ENCODE measurements at regions of chr1 and their contacts with region 1.

Region 1: GRCh38 chr1:180003026-180003695 is 48.6 kb downstream of the CEP350 start:
- DNase-seq: no peak
- ATAC-seq: peak in 1 of 2 donors; percentile 36
- H3K4me3 ChIP-seq: no peak overlapping the region
- H3K27ac ChIP-seq: peak overlapping the region; percentile 42 to 59 (median 48)
- H3K4me1 ChIP-seq: peaks cover 22 to 24% of the 10 kb centered on the region in 2 donors
- H3K27me3 ChIP-seq: no peaks in the 10 kb centered on the region
- CTCF ChIP-seq: no peak
- POLR2A ChIP-seq: no peak

Region 2: GRCh38 chr1:179709841-179710329 is 293.3 kb before region 1 on chr1:
- in situ Hi-C with region 1: no loop called
- intact Hi-C with region 1: no loop called
- DNase-seq: peak in 1 of 2 donors; percentile 15
- ATAC-seq: peak; percentile 86 to 93
- H3K4me3 ChIP-seq: no peak overlapping the region
- H3K27ac ChIP-seq: peak overlapping the region in 3 of 4 donors; percentile 42 to 49 (median 47)
- H3K4me1 ChIP-seq: peaks cover 0 to 11% of the 10 kb centered on the region in 2 donors
- H3K27me3 ChIP-seq: no peaks in the 10 kb centered on the region
- CTCF ChIP-seq: no peak
- POLR2A ChIP-seq: no peak

Region 3: GRCh38 chr1:179860652-179861051 is 142.5 kb before region 1 on chr1:
- in situ Hi-C with region 1: no loop called
- intact Hi-C with region 1: loop called (anchors 5 kb)
- DNase-seq: no peak
- ATAC-seq: no peak
- H3K4me3 ChIP-seq: no peak overlapping the region
- H3K27ac ChIP-seq: no peak overlapping the region
- H3K4me1 ChIP-seq: peaks cover 6 to 10% of the 10 kb centered on the region in 2 donors
- H3K27me3 ChIP-seq: no peaks in the 10 kb centered on the region
- CTCF ChIP-seq: no peak
- POLR2A ChIP-seq: no peak

Region 4: DNA sequence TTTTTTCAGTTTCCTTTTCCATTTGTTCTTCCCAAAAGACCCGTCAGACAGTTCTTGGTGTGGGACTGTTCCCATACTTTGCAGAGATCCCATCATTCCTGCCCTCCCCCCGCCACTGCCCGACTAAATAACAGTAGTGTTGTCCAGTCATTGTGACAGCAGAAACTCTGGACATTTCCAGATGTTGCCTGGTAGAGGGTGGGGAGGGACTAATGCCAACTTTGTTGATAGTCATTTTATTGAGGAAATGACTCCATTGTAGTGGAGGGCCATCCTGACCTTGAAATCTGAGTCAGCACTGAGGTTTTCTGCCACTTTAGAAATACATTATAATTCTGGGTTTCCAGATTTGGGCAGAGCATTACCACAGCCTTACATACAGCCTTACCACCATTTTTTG is 36.9 kb after region 1 on chr1:
- in situ Hi-C with region 1: no loop called
- intact Hi-C with region 1: no loop called
- DNase-seq: no peak
- ATAC-seq: no peak
- H3K4me3 ChIP-seq: no peak overlapping the region
- H3K27ac ChIP-seq: no peak overlapping the region
- H3K4me1 ChIP-seq: no peaks in the 10 kb centered on the region
- H3K27me3 ChIP-seq: no peaks in the 10 kb centered on the region
- CTCF ChIP-seq: no peak
- POLR2A ChIP-seq: no peak

Region 5: GRCh38 chr1:180080433-180080832 is 77.3 kb after region 1 on chr1:
- in situ Hi-C with region 1: no loop called
- intact Hi-C with region 1: no loop called
- DNase-seq: no peak
- ATAC-seq: peak; percentile 58 to 87
- H3K4me3 ChIP-seq: no peak overlapping the region
- H3K27ac ChIP-seq: peak overlapping the region in 3 of 4 donors; percentile 19 to 57 (median 35)
- H3K4me1 ChIP-seq: no peaks in the 10 kb centered on the region
- H3K27me3 ChIP-seq: no peaks in the 10 kb centered on the region
- CTCF ChIP-seq: no peak
- POLR2A ChIP-seq: no peak

Region 6: DNA sequence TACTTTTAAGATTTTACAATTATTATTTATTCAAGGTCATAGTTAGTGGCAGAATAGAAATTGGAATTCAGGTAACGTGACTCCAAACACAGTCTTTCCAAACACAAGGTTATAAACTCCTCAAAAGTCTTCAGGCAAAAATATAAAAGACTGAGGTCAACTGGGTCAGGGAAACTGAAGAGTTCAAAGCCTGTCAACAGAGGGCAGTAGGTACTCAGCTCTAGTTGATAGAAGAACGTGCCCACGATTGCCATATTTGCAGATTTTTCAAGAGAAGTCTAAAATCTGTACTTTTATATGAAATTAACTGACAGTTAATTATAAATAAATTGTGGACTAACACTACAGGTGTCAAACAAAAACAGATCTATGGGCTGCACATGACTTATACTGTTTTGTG is 361.9 kb after region 1 on chr1:
- in situ Hi-C with region 1: no loop called
- intact Hi-C with region 1: no loop called
- DNase-seq: no peak
- ATAC-seq: no peak
- H3K4me3 ChIP-seq: no peak overlapping the region
- H3K27ac ChIP-seq: no peak overlapping the region
- H3K4me1 ChIP-seq: peaks cover 0 to 4% of the 10 kb centered on the region in 2 donors
- H3K27me3 ChIP-seq: no peaks in the 10 kb centered on the region
- CTCF ChIP-seq: peak in 1 of 5 experiments; percentile 7
- POLR2A ChIP-seq: no peak